ENCODE measurements at regions of chr1 and their contacts with region 1.

Region 1: DNA sequence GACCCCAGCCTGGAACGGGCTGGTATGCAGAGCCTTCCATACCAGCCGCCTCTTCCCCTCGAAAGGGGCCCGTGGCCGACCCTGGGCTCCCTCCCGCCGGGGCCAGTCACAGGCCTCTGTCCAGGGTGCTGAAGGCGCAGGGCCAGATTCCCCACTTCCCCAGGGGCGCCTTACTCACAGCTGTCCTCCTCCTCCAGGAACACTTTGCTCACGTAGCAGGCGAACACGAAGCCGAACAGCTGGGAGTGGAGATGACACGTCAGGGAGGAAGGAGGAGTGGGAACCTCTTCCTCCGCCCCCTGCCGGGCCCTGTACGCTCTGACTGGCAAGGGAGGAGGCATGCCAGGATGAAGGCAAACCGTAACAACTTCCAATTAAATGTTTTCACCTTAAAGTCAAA is 57.3 kb downstream of the NKAIN1 start:
- DNase-seq: peak; percentile 63
- H3K4me3 ChIP-seq: 0 out of 2 replicates have a peak overlapping the region, but pooled peaks have one; percentile 6
- CTCF ChIP-seq: peak; percentile 24

Region 2: DNA sequence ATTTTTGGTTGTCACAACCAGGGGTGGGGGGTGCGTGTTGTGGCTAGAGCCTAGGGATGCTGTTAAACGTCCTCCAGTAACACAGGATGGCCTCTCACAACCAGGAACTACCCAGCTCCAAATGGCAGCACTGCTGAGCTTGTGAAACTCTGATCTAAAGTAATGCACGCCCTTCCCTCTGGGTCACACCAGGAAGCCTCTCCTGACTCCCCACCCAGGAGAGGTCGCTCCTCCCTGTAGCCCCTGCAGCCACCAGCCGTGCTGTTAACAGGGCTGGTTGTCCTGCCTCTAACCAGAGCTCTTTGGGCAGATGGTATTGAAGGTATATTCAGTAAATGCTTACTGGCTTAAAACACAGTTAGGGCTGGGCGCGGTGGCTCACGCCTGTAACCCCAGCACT is 15.9 kb before region 1 on chr1:
- CTCF ChIA-PET with region 1: interaction called, 122 read pairs
- POLR2A ChIA-PET with region 1: interaction called, 3 read pairs
- DNase-seq: no peak
- H3K4me3 ChIP-seq: no peak overlapping the region
- CTCF ChIP-seq: no peak

Region 3: DNA sequence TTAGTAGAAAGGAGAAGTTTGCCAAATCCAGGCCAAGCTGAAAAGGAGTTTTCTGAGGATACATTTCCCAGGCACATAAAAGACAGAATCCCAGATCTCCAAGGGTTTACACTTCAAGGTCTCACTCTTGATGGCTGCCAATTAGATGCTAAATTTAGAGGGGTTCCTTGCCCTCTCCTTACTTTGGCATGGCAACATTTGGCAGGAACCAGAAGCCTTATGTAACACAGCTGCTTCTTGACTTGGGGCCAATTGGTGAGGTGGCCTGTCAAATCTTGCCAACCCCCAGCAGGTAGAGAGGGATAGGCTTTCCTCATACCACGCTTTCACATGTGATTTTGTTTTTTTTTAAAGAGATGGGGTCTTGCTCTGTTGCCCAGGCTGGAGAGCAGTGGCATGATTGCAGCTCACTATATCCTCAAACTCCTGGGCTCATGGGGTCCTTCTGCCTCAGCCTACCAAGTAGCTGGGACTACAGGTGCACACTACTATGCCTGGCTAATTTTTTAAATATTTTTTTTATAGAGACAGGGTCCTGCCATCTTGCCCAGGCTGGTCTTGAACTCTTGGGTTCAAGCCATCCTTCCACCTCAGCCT is 82.5 kb after region 1 on chr1:
- CTCF ChIA-PET with region 1: interaction called, 18 read pairs
- POLR2A ChIA-PET with region 1: no interaction called
- DNase-seq: no peak
- H3K4me3 ChIP-seq: no peak overlapping the region
- CTCF ChIP-seq: no peak

Region 4: DNA sequence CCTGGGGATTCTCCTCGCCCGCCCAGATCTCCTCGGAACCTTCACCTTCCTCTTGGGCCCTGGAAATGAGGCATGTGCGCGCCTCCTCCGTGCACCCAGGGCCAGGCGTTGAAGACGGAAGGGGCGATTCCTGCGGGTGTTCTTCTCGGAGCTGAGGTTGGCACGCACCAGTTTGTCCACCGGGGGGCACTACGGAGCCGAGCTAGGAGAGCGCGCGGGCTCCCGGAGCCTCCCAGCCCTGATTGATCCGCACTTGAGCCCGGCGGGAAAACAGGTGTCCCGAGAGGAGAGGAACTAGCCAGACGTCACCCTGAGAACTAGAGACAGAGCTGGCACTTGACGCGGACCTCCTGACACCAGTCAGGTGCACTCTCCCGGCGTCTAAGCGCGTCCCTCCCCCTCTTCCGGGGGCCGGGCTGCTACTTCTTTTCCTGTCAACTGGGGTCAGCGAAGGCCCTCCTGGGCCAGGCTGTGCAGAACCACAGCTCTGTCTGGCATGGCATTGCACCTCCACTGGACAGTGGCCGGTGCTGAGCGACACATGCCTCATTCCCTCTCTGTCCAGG is 212.4 kb after region 1 on chr1:
- CTCF ChIA-PET with region 1: interaction called, 11 read pairs
- POLR2A ChIA-PET with region 1: no interaction called
- DNase-seq: no peak
- H3K4me3 ChIP-seq: peak overlapping the region; percentile 12; the same call in 1 of the 2 replicates
- CTCF ChIP-seq: peak; percentile 90

Measured in AG04449 (cell line).